Gastrocnemius medialis (tissue), 4 donors: ENCODE measurements at regions of chr2 and their contacts with region 1.

Region 1: DNA sequence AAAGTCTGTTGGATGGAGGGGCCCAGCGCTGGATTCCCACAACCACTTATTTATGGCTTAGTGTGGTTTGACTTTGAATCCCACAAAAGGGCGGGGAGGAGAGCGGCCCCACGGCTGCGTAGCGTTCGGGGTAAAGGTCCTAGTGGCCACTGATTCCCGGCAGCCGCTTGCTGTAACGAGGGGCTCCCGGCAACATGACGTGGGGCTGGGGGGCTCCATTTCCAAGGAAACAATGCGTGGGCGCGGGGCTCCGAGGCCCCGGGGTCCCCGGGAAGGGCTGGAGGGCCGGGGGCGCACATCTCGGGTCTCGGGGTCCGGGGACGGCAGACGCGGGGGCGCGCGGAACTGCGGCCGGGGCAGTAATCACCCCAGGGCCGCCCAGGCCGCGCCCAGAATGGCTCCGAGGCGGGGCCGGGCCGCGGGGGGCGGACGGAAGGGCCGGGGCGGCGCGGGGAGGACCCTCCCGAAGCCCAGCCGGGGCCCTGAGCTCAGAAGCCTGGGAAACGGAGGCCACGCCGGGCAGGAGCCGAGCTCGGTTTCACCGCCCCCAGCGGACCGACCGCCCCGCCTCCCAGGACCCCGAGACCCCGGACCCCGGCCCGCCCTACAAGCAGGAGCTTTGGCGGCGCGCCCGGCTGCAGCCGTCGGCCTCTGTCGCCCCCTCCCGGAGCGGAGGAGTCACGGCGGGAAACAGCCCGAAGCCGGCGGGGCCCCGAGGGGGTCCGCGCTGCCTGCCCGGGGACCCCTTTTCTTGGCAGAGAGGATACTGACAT is 11.9 kb upstream of the MLPH start:
- DNase-seq: peak; percentile 56 to 69
- ATAC-seq: peak; percentile 45 to 72
- H3K4me3 ChIP-seq: peak overlapping the region; percentile 58 to 85 (median 67)
- H3K27ac ChIP-seq: peak overlapping the region; percentile 78 to 93 (median 89)
- H3K4me1 ChIP-seq: peaks cover 10 to 28% of the 10 kb centered on the region in 2 donors
- H3K27me3 ChIP-seq: peaks cover 0 to 8% (median 5%) of the 10 kb centered on the region in 3 donors
- CTCF ChIP-seq: peak; percentile 91 to 99 (median 97)
- POLR2A ChIP-seq: peak; percentile 41 to 69

Region 2: GRCh38 chr2:237122214-237122666 is 352.9 kb before region 1 on chr2:
- in situ Hi-C with region 1: loop called in 1 of 4 experiments (anchors 10 kb)
- intact Hi-C with region 1: loop called (anchors 10 kb)
- DNase-seq: peak; percentile 49 to 73
- ATAC-seq: peak; percentile 54 to 76
- H3K4me3 ChIP-seq: no peak overlapping the region
- H3K27ac ChIP-seq: peak overlapping the region in 2 of 4 donors; percentile 24 to 39
- H3K4me1 ChIP-seq: peaks cover 11 to 13% of the 10 kb centered on the region in 2 donors
- H3K27me3 ChIP-seq: no peaks in the 10 kb centered on the region
- CTCF ChIP-seq: peak; percentile 66 to 77 (median 70)
- POLR2A ChIP-seq: no peak

Region 3: DNA sequence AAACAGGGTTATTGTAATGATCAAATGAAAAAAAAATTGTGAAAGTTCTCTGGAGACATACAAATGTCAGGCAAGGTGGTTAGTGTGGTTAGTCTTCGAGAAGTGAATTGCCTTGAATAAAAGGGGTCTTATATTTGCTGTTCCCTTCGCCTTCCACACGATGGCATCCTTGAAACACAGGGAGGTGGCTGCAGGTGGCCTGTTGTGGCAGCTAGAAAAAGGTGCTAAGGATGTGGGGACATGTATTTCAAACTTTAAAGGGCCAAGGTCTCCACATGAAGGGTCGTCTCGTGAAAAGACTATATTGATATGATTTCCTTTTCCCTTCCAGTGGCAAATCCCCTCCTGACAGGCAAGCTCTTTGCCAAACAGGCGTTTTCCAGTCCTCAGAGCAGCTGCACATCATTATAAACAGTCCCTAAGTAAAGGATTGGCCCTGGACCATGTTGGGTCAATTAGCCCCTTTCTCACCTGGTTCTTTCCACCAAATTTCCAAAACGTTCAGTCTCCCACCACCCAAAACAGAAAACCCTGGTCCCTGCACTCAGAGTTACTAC is 321.0 kb before region 1 on chr2:
- in situ Hi-C with region 1: no loop called
- intact Hi-C with region 1: loop called (anchors 5 kb)
- DNase-seq: no peak
- ATAC-seq: peak in 1 of 2 donors; percentile 29
- H3K4me3 ChIP-seq: no peak overlapping the region
- H3K27ac ChIP-seq: peak overlapping the region; percentile 66 to 81 (median 78)
- H3K4me1 ChIP-seq: peaks cover 2 to 8% of the 10 kb centered on the region in 2 donors
- H3K27me3 ChIP-seq: no peaks in the 10 kb centered on the region
- CTCF ChIP-seq: peak; percentile 43 to 55 (median 50)
- POLR2A ChIP-seq: no peak

Region 4: GRCh38 chr2:237421542-237422116 is 53.5 kb before region 1 on chr2:
- in situ Hi-C with region 1: loop called (anchors 5 to 10 kb)
- intact Hi-C with region 1: loop called (anchors 1 kb)
- DNase-seq: peak; percentile 74 to 83
- ATAC-seq: peak; percentile 97 to 98
- H3K4me3 ChIP-seq: peak overlapping the region; percentile 19 to 26 (median 20)
- H3K27ac ChIP-seq: peak overlapping the region; percentile 62 to 80 (median 72)
- H3K4me1 ChIP-seq: peaks cover 7 to 16% of the 10 kb centered on the region in 2 donors
- H3K27me3 ChIP-seq: no peaks in the 10 kb centered on the region
- CTCF ChIP-seq: peak; percentile 81 to 91 (median 88)
- POLR2A ChIP-seq: peak in 1 of 2 donors; percentile 18